Activated CD8-positive, alpha-beta T cell treated with anti-CD3 and anti-CD28 coated beads, Interleukin-2, amount 10 ng/mL, durations not matched to agents 7 days and 5 days (primary cell): ENCODE measurements at regions of chr12 and their contacts with region 1.

Region 1: GRCh38 chr12:110513842-110514241 is 11.7 kb downstream of the RAD9B start:
- DNase-seq: no peak
- ATAC-seq: no peak
- H3K4me3 Mint-ChIP-seq: no peak overlapping the region
- H3K27ac Mint-ChIP-seq: no peak overlapping the region
- H3K4me1 Mint-ChIP-seq: peaks cover 2% of the 10 kb centered on the region
- H3K27me3 Mint-ChIP-seq: peaks cover 11% of the 10 kb centered on the region

Region 2: DNA sequence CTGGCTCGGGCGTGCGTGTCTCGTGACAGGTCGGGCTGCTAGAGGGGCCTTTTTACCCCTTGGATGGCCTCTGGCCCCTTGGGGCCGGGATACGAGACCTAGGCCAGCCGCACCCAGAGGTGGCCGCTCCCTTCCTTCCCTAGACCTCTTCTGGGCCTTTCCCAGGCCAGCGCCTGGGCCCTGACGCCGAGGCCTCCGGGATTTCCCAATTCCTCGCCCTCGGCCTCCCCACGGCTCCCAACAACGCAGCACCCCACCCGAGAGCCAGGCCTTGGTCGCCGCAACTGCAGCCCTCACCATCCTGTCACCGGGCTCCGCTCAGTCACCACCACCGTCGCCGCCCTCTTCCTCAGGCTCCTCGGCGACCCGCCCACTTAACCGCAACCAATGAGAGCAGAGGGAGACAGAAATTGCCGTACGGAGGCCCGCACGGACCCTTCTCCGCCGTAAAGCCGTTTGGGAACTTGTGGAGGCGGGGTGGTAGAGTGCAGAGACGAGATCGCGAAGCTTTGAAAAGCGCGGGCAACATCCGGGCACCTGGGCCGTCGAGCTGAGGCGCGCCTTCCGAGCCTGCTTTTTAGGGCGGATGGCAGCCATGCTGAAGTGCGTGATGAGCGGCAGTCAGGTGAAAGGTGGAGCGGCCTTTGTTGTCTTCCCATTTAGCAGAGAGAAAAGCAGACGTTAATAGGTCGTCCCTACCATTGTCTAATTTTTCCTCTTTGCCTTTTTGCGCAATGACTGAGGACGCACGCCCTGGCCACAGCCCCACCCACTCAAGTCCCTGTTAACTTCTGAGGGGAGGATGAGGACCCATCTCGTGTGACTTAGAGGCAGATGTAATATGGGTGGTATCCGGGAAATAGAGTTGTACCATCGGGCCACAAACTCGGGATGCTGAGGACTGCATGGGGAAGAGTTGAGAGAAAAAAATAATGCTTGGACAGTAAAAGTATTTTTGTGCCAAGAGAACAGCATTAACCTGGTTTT is 11.8 kb before region 1 on chr12 and contains the starts of genes RAD9B and VPS29:
- CTCF ChIA-PET with region 1: interaction called, 13 read pairs
- POLR2A ChIA-PET with region 1: interaction called, 8 read pairs
- DNase-seq: peak; percentile 100
- ATAC-seq: peak; percentile 98
- H3K4me3 Mint-ChIP-seq: peak within 1 kb of the TSS; percentile 97
- H3K27ac Mint-ChIP-seq: peak within 1 kb of the TSS; percentile 99
- H3K4me1 Mint-ChIP-seq: peaks cover 40% of the 10 kb centered on the region
- H3K27me3 Mint-ChIP-seq: no peaks in the 10 kb centered on the region
- total RNA-seq, gene RAD9B: 0.68 to 2.3 TPM
- total RNA-seq, gene VPS29: 126 to 128 TPM